Esophagus muscularis mucosa (tissue), 4 donors: ENCODE measurements at regions of chr5 and their contacts with region 1.

Region 1: GRCh38 chr5:61331407-61332357 is at the start of gene ZSWIM6:
- DNase-seq: peak; percentile 100
- H3K4me3 ChIP-seq: peak within 1 kb of the TSS; percentile 82 to 99 (median 88)
- H3K27ac ChIP-seq: peak within 1 kb of the TSS; percentile 97 to 98 (median 98)
- H3K4me1 ChIP-seq: peaks cover 16 to 52% (median 46%) of the 10 kb centered on the region in 4 donors
- H3K27me3 ChIP-seq: no peaks in the 10 kb centered on the region
- CTCF ChIP-seq: no peak
- EP300 ChIP-seq: no peak
- POLR2A ChIP-seq: peak; percentile 87
- total RNA-seq, gene ZSWIM6: 10.2 to 16.4 (median 12.5) TPM

Region 2: DNA sequence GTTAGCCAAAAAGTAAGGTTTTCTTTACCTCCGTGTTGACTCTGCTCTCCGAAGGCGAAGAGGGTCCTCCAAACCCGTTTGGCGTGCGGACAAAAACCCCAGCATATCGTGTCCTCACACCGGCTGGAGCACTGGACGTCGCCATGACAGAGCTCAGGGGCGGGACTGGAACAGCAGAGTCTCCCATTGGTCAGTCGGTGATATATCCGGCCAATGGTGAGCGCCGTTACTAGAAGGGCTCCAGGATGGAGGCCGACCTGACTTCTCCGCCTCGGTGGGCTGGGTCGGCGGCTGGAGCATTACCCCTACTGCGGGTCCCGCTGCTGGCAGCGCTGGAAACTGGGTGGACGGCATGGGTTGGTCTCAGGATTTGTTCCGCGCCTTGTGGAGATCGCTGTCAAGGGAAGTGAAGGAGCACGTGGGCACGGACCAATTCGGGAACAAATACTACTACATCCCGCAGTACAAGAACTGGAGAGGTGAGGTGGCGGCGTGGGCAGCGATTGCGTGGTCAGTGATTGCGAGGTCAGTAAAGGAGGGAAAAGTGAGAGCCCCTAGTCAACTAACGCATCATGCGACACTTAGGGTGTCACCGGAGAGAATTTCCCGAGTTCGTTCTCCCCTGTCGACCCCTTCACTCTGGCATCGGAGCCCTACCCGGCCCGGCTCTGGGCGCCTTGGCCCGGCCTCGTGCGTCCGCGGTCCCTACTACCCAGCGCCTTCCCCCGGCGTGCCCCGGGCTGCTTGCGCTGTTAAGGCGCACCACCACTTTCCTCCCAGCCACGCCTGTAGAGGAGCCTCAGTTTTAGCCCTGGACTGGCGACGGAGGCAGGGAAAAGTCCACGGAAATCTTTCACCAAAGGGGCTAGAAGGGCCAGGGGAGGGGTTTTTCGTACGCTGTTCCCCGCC is 386.5 kb before region 1 on chr5 and contains the starts of genes ERCC8 and NDUFAF2:
- intact Hi-C with region 1: loop called (anchors 10 kb)
- DNase-seq: peak; percentile 98
- H3K4me3 ChIP-seq: peak within 1 kb of the TSS; percentile 69 to 81 (median 76)
- H3K27ac ChIP-seq: peak within 1 kb of the TSS; percentile 82 to 90 (median 84)
- H3K4me1 ChIP-seq: peaks cover 17 to 28% (median 25%) of the 10 kb centered on the region in 4 donors
- H3K27me3 ChIP-seq: no peaks in the 10 kb centered on the region
- CTCF ChIP-seq: no peak
- EP300 ChIP-seq: no peak
- POLR2A ChIP-seq: no peak
- total RNA-seq, gene ERCC8: 5.2 to 17.9 (median 16.1) TPM
- total RNA-seq, gene NDUFAF2: 29.4 to 42.8 (median 39.6) TPM

Region 3: DNA sequence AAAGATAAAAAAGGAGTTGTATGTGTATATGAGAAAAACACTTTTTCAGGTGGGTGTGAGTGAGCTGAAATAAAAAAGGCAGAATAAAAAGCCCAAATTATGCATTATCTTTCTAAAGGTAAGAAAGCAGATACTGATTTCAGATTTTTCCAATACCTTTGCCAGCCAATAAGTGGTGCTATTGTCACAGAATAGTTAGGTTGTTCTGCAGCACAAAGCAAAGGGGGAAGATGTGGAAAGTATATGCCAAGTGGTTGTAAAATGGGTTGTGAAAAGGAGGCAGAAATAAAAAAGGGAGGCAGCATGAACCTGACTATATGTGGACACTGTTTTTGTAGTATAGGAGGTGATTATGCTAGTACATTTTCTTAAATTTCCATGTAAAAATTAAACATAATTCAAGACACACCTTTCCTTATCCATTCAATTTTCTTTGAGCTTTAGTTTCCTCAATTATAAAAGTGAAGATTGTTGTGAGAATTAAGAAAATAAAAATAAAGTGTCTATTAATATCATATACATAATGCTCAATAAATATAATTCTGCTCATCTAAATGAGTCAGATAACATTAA is 276.2 kb before region 1 on chr5:
- intact Hi-C with region 1: loop called (anchors 10 kb)
- DNase-seq: no peak
- H3K4me3 ChIP-seq: no peak overlapping the region
- H3K27ac ChIP-seq: no peak overlapping the region
- H3K4me1 ChIP-seq: no peaks in the 10 kb centered on the region
- H3K27me3 ChIP-seq: no peaks in the 10 kb centered on the region
- CTCF ChIP-seq: peak; percentile 38 to 51 (median 39)
- EP300 ChIP-seq: no peak
- POLR2A ChIP-seq: no peak

Region 4: DNA sequence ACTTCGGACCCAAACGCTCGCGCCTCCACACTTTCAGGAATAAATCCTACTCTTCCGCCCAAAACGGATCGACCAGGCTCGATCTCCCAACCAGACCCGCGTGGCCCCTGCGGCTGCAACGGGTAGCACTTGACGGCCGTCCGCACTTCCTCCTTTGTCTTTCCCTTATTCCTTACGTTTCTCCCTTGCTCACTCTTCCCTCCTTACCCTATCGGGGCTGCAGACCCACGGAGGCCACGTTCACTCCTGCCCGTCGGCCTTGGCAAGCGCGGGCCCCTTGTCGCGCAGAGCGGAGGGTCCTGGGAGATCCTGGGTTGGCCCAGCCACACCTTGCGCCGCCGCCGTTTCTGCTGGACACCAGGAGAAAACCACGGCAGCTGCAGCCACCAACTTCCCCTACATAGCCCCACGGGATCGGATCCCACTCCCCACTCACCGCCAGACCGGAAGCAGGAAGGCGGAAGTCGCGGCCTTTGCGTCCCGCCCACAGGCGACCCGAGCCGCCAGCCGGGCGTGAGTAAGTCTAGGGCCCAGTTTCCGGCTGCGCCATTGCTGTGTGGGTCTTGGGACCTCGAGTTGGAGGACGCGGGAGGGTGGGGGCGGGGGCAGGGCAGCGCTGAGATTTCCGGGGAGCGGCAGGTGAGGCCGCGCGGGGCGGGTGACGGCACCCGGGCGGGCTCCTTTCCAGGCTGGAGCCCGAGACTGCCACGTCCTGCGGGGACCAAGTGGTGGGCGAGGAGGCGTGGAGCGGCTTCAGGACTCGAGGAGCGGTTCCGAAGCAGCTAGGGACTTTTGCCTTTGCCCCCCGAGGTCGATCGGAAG is 169.5 kb before region 1 on chr5 and contains the start of gene SMIM15:
- intact Hi-C with region 1: loop called (anchors 5 kb)
- DNase-seq: peak; percentile 95
- H3K4me3 ChIP-seq: peak within 1 kb of the TSS; percentile 76 to 92 (median 83)
- H3K27ac ChIP-seq: peak within 1 kb of the TSS; percentile 85 to 92 (median 88)
- H3K4me1 ChIP-seq: peaks cover 11 to 40% (median 30%) of the 10 kb centered on the region in 4 donors
- H3K27me3 ChIP-seq: no peaks in the 10 kb centered on the region
- CTCF ChIP-seq: peak in 1 of 3 experiments; percentile 3
- EP300 ChIP-seq: no peak
- POLR2A ChIP-seq: peak; percentile 14
- total RNA-seq, gene SMIM15: 17.0 to 29.6 (median 26.6) TPM

Region 5: DNA sequence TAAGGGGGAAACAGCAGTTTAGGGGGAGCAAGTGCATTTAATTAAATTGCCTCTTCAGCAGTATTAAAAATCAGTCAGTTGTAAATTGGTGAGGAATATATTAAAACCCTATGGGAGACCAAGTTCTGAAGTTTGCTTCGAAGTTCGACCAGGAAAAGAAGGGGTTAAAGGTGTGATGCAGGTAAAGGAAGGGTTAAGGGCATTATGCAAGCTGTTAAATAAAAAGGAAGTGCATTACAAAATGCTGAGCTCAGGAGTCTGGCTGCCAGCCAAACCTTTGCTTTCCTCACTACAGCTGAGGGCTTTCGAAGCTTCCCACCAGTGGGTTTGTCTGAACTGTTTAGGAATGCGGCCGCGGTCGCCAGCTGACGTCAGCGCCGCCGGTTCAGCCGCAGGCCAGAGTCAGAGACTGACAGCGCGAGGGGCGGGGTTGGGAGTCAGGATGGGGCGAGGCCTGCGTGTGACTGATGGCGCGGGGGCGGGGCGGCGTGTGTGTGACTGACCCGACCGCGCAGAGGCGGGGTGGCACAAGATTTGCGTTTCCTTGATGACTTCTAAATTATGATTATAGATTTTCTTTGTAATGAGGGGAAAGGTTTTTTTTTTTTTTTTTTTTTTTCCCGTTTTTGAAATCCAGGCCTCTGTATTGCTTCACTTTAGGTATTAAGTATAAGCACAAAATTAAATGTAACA is 76.9 kb after region 1 on chr5:
- intact Hi-C with region 1: loop called (anchors 2 kb)
- DNase-seq: peak; percentile 99
- H3K4me3 ChIP-seq: peak overlapping the region; percentile 11 to 37 (median 29)
- H3K27ac ChIP-seq: peak overlapping the region; percentile 24 to 74 (median 60)
- H3K4me1 ChIP-seq: peaks cover 19 to 45% (median 37%) of the 10 kb centered on the region in 4 donors
- H3K27me3 ChIP-seq: no peaks in the 10 kb centered on the region
- CTCF ChIP-seq: peak in 1 of 3 experiments; percentile 23
- EP300 ChIP-seq: peak; percentile 91
- POLR2A ChIP-seq: no peak

Region 6: DNA sequence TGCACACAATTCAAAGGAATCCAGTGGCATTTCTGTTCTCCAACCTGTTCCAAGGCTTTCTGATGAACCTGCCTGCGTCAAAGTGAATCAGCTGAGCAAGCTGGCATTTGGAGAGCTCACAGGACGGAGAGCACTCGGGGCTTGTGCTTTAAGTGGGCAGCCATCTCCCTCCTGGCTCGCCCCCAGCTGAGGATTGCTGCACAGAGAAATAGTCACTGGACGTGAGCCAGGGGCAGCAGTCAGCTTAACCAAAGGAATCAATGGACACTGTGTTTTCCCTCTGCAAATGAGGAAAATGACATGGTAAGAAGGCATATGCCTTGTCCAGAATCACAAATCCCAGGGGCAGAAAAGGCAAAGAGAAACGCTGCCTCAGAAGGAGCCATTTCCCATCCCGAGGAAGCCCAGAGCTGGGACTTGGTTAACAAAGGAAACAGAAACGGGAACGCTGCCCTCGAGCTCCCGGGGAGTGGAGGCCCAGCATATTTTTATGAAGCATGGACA is 299.8 kb after region 1 on chr5:
- intact Hi-C with region 1: loop called (anchors 5 kb)
- DNase-seq: no peak
- H3K4me3 ChIP-seq: peak overlapping the region in 3 of 4 donors; percentile 6 to 25 (median 24)
- H3K27ac ChIP-seq: peak overlapping the region; percentile 54 to 74 (median 62)
- H3K4me1 ChIP-seq: peaks cover 14 to 21% (median 16%) of the 10 kb centered on the region in 4 donors
- H3K27me3 ChIP-seq: no peaks in the 10 kb centered on the region
- CTCF ChIP-seq: no peak
- EP300 ChIP-seq: no peak
- POLR2A ChIP-seq: no peak